Head of caudate nucleus (tissue), 42 donors: ENCODE measurements at regions of chr3 and their contacts with region 1.

Region 1: GRCh38 chr3:186044973-186045372 is 63.9 kb downstream of the ETV5 start:
- DNase-seq: peak; percentile 24 to 91 (median 78)

Region 2: DNA sequence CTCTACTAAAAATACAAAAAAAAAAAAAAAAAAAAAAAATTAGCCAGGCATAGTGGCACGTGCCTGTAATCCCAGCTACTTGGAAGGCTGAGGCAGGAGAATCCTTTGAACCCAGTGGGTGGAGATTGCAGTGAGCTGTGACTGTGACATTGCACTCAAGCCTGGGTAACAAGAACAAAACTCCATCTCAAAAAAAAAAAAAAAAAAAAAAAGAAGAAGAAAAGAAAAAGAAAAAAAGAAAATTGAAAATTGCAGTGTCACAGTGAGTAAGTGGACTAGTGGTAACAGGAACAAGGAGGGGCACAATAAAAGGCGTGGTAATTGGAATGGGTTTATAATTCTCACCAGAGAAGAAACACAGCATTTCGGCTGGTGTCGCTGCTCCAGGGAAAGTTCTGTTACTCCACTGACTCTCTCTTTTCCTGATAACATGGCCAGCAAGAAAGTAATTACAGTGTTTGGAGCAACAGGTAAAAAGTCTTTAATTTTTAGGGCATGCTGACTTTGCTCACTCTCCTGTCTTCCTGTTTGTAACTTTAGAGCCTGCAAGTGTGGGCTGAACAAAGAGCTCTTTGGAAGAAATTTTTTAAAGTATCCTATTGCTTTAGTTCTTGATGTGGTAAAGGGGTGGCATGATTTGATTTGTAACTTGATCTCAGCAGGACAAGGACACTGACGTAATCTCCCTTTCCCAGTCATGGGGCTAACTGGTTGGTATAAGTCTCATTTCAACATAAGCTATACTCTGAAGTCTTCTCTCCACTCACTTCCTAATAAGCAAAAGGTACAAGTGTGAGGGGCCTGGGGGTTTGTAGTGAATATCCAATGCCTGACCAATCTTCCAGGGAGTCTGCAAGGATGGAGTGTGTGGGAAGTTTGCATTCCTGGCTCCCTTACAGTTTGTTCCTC is 85.1 kb before region 1 on chr3:
- intact Hi-C with region 1: no loop called
- DNase-seq: no peak

Region 3: GRCh38 chr3:186097663-186098451 is 52.9 kb after region 1 on chr3:
- intact Hi-C with region 1: loop called (anchors 5 kb)
- DNase-seq: peak; percentile 63 to 96 (median 88)

Region 4: GRCh38 chr3:186162221-186162620 is 117.2 kb after region 1 on chr3:
- intact Hi-C with region 1: no loop called
- DNase-seq: peak in 5 of 42 donors; percentile 23 to 52 (median 35)

Region 5: DNA sequence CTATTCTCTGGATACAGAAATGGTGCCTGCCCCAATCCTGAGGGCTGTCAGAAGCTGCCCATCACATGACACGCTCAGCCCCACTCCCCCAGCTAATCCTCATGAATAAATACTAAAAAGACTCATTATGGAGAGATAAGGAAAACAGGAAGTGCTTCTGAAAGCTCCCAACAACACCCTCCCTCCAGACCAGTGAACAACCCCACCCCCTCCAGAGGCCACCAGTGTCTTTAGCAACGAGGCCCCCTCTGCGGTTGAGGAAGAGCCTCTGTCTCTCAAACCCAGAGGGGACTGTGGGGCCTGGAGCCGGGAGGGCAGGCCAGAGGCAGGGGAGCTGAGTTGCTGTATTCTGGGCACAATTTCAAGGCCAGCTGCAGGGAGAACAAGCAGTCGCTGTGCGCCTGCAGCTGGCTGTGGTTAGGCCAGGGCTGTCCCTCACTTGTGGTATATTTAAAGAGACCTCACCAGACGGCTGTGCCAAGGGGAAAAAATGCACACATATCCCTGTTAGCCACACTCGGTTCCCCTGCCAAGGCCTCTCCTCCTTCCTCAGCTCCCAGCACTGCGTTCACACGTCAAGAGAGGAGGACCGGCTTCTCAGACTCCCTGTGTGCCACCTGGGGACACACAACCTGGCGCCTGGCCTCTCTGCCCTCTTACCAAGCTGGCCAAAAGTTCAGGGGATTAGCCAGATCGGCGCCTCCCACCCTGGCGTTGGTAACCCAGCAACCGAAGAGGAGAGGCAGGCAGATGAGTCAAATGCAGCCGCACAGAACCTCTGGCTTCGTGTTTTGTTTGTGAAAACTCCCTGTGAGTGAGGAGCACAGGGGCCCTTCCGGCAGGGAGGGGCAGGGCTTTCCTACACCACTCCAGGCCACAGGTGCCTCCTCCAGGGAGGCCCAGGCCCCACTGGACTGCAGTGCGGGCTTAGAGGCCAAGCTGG is 165.1 kb after region 1 on chr3:
- intact Hi-C with region 1: loop called (anchors 5 kb)
- DNase-seq: peak; percentile 70 to 97 (median 90)

Region 6: DNA sequence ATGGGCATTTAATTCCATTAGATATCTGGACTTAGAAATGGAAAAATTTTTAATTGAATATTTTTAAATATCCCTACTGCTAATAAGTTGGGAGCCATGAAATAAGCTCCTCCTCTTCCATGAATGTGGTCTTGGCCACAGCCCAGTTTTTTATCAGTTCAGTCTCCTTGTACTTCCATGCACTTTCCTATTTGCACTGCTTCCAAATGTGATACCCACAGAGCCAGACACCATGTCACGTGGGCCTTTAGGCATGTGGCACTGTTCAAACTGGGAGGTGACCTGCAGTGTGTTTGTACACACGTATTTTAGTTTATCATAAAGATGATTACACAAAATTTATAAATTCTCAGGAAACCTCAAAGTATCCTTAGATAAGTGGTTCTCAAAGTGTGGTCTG is 397.2 kb after region 1 on chr3:
- intact Hi-C with region 1: no loop called
- DNase-seq: no peak